GM12878 (cell line): ENCODE measurements at regions of chr11 and their contacts with region 1.

Region 1: DNA sequence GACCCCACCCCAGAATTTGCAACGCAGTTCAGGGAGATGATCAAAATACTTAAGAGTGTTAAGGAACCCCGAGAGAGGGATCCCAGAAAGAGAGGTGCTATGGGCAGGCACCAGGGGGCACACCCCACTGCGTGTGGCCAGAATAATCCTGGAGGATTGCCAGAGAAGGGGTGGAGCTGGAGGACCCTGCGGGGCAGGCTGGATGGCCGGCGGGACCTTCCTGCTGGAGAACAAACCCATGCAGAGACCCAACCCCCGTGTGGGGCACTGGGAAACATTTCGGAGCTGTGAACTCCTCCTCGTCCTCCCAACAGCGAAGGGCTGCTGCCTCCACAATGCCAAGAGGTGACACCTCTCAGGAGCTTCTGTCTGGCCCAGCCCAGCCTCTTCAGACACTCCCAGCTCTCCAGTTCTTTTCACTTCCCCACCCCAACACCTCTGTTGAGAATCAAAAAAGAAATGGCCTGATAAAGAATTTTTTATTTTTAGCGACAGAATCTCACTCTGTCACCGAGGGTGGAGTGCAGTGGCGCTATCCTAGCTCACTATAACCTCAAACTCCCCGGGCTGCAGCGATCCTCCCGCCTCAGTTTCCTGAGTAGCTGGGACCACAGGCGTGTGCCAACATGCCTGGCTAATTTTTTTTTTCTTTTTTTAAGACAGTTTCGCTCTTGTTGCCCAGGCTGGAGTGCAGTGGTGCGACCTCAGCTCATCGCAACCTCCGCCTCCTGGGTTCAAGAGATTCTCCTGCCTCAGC is 25.6 kb downstream of the RHOD start:
- DNase-seq: no peak
- ATAC-seq: peak; percentile 7; the same call in 2 of the 3 replicates
- H3K4me3 ChIP-seq: peak overlapping the region; percentile 5; the same call in 1 of the 2 replicates
- H3K27ac ChIP-seq: no peak overlapping the region
- H3K4me1 ChIP-seq: peaks cover 20% of the 10 kb centered on the region
- H3K27me3 ChIP-seq: no peaks in the 10 kb centered on the region
- CTCF ChIP-seq: peak in 2 of 3 experiments; percentile 11 to 15; a peak in 1 of 6 replicates
- EP300 ChIP-seq: no peak
- POLR2A ChIP-seq: no peak
- RAD21 ChIP-seq: peak; percentile 40; the same call in 1 of the 2 replicates

Region 2: DNA sequence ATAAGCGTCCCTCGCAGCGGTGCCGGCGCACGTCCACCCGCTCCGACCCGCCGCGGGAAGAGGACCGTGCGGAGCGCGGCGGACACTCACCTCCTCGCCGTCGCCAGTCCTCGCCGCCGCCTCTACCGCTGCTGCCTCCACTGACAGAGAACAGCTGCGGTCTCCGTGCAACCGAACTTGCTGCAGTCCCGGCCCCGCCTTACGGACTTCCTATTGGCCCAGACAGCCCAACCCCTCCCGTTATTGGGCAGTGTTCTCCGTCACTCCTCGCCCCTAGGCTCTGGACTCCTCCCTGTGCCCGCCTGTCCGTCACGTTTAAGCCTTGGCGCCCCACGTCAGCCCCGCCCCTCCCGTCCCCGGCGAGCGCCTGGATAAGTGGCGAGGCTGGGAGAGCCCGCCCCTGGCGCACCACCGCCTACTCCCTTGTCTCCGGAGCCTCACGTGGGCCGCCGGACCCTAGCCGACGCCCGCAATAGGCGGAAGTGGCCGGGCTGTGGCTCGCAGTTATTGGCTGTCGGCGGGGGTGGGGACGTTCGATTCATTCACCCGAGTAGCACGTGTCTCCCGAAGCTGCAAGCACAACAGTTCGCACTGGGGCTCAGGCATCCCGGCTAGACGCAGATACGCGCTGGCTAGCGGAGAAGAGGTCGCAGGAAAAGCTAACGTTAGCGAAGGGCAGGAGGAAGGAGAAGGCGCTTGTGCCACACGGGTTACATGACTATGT is 123.8 kb before region 1 on chr11 and contains the start of gene PC:
- CTCF ChIA-PET with region 1: no interaction called
- POLR2A ChIA-PET with region 1: no interaction called
- RAD21 ChIA-PET with region 1: no interaction called
- SMC1A ChIA-PET with region 1: no interaction called
- in situ Hi-C with region 1: no loop called
- intact Hi-C with region 1: no loop called
- DNase-seq: peak; percentile 67
- ATAC-seq: peak; percentile 96
- H3K4me3 ChIP-seq: peak within 1 kb of the TSS; percentile 66; the same call in 1 of the 2 replicates
- H3K27ac ChIP-seq: no peak within 1 kb of the TSS
- H3K4me1 ChIP-seq: peaks cover 13% of the 10 kb centered on the region
- H3K27me3 ChIP-seq: no peaks in the 10 kb centered on the region
- CTCF ChIP-seq: no peak
- EP300 ChIP-seq: no peak
- POLR2A ChIP-seq: peak; percentile 87
- RAD21 ChIP-seq: no peak
- polyA plus RNA-seq, gene PC: 0.26 to 0.79 TPM

Region 3: DNA sequence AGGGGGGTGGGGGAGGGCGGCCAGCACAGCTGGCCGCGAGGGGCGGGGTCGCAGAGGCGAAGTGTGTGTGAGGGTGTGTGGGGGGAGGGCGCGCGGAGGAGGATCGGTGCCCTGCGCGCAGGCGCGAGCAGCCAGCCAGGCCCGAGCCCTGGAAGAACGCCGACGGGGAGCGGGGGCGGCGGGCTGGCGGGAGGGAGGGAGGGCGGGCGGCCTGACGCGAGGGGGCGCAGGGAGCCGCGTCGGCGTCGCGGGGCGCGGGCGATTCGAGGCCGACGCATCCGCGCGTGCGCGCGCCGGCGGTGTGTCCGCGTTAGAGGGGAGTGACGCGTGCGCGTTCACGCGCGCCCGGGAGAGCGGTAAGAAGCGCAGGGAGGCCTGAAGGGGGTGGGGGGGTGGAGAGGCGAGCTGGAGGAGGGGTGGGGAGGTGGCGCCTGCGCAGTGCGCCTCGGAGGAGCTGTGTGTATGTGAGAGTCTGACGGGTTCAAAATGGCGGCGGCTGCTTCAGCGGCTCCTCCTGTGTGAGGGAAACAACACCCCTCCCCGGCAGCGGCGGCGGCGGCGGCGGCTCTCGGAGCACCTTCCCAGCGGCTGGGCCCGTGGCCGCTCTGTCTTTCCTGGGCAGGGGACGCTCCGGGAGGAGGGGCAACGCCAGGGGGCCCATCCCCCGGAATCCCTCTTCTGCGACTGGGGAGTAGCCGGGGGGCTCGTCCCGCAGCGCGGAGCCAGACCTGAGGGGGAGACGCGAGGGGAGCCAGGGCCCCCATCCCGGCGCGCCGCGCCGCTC is 36.8 kb after region 1 on chr11 and contains the start of gene KDM2A:
- CTCF ChIA-PET with region 1: interaction called, 12 read pairs
- POLR2A ChIA-PET with region 1: no interaction called
- RAD21 ChIA-PET with region 1: interaction called, 4 read pairs
- SMC1A ChIA-PET with region 1: interaction called, 9 read pairs
- in situ Hi-C with region 1: no loop called
- intact Hi-C with region 1: loop called (anchors 5 kb)
- DNase-seq: peak; percentile 95
- ATAC-seq: peak; percentile 81
- H3K4me3 ChIP-seq: peak within 1 kb of the TSS; percentile 93
- H3K27ac ChIP-seq: peak within 1 kb of the TSS; percentile 94
- H3K4me1 ChIP-seq: peaks cover 26% of the 10 kb centered on the region
- H3K27me3 ChIP-seq: no peaks in the 10 kb centered on the region
- CTCF ChIP-seq: peak in 1 of 3 experiments; percentile 35; a peak in 1 of 6 replicates
- EP300 ChIP-seq: no peak
- POLR2A ChIP-seq: peak; percentile 58
- RAD21 ChIP-seq: no peak
- polyA plus RNA-seq, gene KDM2A: 10.5 to 13.0 TPM

Region 4: DNA sequence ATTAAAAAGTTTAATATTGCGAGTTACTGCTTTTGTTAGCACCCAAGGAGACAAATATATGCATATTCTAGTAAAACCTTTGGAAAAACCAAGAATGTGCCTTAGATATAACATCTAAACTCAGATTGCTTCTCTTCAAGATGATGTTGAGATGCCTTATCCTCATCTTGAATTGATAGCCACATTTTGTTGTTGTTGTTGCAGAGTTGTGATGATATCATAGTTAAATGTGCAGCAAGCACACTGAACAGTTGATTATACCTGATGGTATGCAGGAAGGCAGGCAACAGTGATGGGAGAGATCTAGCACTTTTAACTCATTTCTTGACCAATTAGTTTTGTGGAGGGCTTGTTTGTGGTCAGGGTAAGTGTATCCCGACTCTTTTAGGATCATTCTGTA is 84.9 kb after region 1 on chr11:
- CTCF ChIA-PET with region 1: interaction called, 114 read pairs
- POLR2A ChIA-PET with region 1: interaction called, 4 read pairs
- RAD21 ChIA-PET with region 1: interaction called, 14 read pairs
- SMC1A ChIA-PET with region 1: interaction called, 9 read pairs
- in situ Hi-C with region 1: loop called (anchors 5 kb)
- intact Hi-C with region 1: loop called (anchors 1 kb)
- DNase-seq: no peak
- ATAC-seq: no peak
- H3K4me3 ChIP-seq: no peak overlapping the region
- H3K27ac ChIP-seq: no peak overlapping the region
- H3K4me1 ChIP-seq: peaks cover 17% of the 10 kb centered on the region
- H3K27me3 ChIP-seq: no peaks in the 10 kb centered on the region
- CTCF ChIP-seq: no peak
- EP300 ChIP-seq: no peak
- POLR2A ChIP-seq: no peak
- RAD21 ChIP-seq: no peak

Region 5: DNA sequence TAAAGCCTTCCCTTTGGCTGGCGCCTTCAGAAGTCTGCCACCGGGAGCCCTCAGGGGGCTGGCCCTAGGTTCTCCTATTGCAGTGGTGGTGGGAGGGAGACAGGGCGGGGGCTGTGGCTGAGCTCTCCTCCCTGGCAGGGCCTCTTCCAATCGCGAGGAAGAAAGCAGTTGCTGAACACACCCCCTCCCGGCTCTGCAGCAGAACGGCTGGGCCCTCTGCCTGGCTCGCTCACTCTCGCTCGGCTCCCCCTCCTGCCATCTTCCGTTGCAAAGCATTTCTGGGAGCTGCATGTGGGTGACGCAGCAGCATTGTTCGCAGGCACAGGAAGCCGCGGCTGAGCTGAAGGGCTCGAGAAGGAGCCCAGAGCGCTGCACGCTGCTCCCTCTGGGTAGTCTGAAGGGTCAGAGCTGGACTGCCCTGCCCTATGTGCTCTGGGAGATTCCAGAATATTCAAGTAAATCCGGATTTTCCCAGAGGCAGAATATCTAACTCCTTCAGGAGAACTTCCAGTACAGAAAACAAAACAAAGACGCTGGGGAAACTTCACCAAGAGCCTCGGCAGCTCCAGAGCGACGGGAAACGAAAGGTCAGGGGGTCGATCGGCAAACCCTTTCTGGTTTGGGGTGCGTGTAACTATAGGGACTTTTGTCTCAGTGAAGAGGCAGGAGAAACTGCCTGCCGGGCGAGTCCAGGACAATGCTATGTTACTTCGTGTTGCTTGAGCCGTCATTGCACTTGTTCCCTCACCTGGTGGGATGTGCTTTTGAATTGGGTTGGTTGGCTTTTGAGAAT is 157.8 kb after region 1 on chr11:
- CTCF ChIA-PET with region 1: interaction called, 11 read pairs
- POLR2A ChIA-PET with region 1: interaction called, 5 read pairs
- RAD21 ChIA-PET with region 1: interaction called, 8 read pairs
- SMC1A ChIA-PET with region 1: interaction called, 3 read pairs
- in situ Hi-C with region 1: no loop called
- intact Hi-C with region 1: loop called (anchors 10 kb)
- DNase-seq: peak; percentile 93
- ATAC-seq: peak; percentile 93
- H3K4me3 ChIP-seq: peak overlapping the region; percentile 89
- H3K27ac ChIP-seq: peak overlapping the region; percentile 90
- H3K4me1 ChIP-seq: peaks cover 17% of the 10 kb centered on the region
- H3K27me3 ChIP-seq: no peaks in the 10 kb centered on the region
- CTCF ChIP-seq: peak in 1 of 3 experiments; percentile 6; a peak in 1 of 6 replicates
- EP300 ChIP-seq: peak in 1 of 2 experiments; percentile 27; a peak in 1 of 4 replicates
- POLR2A ChIP-seq: peak; percentile 96
- RAD21 ChIP-seq: 0 out of 2 replicates have a peak, but pooled peaks have one; percentile 11

Region 6: GRCh38 chr11:67382276-67383136 is 300.3 kb after region 1 on chr11:
- CTCF ChIA-PET with region 1: interaction called, 23 read pairs
- POLR2A ChIA-PET with region 1: interaction called, 3 read pairs
- RAD21 ChIA-PET with region 1: interaction called, 16 read pairs
- SMC1A ChIA-PET with region 1: interaction called, 19 read pairs
- in situ Hi-C with region 1: no loop called
- intact Hi-C with region 1: no loop called
- DNase-seq: no peak
- ATAC-seq: peak; percentile 93
- H3K4me3 ChIP-seq: no peak overlapping the region
- H3K27ac ChIP-seq: no peak overlapping the region
- H3K4me1 ChIP-seq: peaks cover 19% of the 10 kb centered on the region
- H3K27me3 ChIP-seq: peaks cover 0 to 3% of the 10 kb centered on the region in 2 experiments; a peak in 2 of 4 replicates
- CTCF ChIP-seq: peak; percentile 99; a peak in 5 of 6 replicates
- EP300 ChIP-seq: no peak
- POLR2A ChIP-seq: no peak
- RAD21 ChIP-seq: peak; percentile 99